Activated naive CD4-positive, alpha-beta T cell treated with anti-CD3 and anti-CD28 coated beads, Interleukin-2, amount 10 ng/mL, durations not matched to agents 7 days and 5 days (primary cell): ENCODE measurements at regions of chr17 and their contacts with region 1.

Region 1: GRCh38 chr17:31309556-31309955 is 4.3 kb downstream of the EVI2B start:
- DNase-seq: no peak
- H3K4me3 Mint-ChIP-seq: peak overlapping the region; percentile 88
- H3K27ac Mint-ChIP-seq: peak overlapping the region; percentile 97
- H3K4me1 Mint-ChIP-seq: peaks cover 54% of the 10 kb centered on the region
- H3K27me3 Mint-ChIP-seq: no peaks in the 10 kb centered on the region

Region 2: GRCh38 chr17:31321481-31321880 is 11.9 kb after region 1 on chr17 and contains the start of gene EVI2A:
- CTCF ChIA-PET with region 1: interaction called, 23 read pairs
- DNase-seq: peak; percentile 91
- H3K4me3 Mint-ChIP-seq: peak within 1 kb of the TSS; percentile 78
- H3K27ac Mint-ChIP-seq: peak within 1 kb of the TSS; percentile 94
- H3K4me1 Mint-ChIP-seq: peaks cover 30% of the 10 kb centered on the region
- H3K27me3 Mint-ChIP-seq: no peaks in the 10 kb centered on the region

Region 3: DNA sequence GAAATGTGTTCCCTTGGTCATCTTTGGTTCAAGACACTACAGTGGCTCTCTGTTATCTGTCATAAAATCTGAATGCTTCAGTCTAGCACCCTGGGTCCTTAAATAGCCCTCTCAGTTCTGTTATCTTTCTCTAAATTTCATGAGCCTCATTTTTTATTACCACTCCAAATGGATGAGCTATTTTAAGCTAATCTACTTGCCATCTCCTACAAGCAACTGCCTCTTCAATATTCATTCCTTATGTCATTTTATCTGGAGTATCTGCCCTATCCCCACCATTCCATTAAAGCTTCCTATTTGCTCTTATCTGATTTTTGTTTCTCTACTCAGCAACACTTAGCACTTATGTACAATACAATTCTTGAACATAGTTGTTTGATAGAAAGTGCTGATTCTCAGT is 39.9 kb after region 1 on chr17:
- CTCF ChIA-PET with region 1: no interaction called
- DNase-seq: no peak
- H3K4me3 Mint-ChIP-seq: no peak overlapping the region
- H3K27ac Mint-ChIP-seq: no peak overlapping the region
- H3K4me1 Mint-ChIP-seq: no peaks in the 10 kb centered on the region
- H3K27me3 Mint-ChIP-seq: no peaks in the 10 kb centered on the region

Region 4: GRCh38 chr17:31373150-31374093 is 63.9 kb after region 1 on chr17:
- CTCF ChIA-PET with region 1: interaction called, 18 read pairs
- DNase-seq: no peak
- H3K4me3 Mint-ChIP-seq: no peak overlapping the region
- H3K27ac Mint-ChIP-seq: no peak overlapping the region
- H3K4me1 Mint-ChIP-seq: peaks cover 19% of the 10 kb centered on the region
- H3K27me3 Mint-ChIP-seq: no peaks in the 10 kb centered on the region

Region 5: GRCh38 chr17:31385428-31386285 is 76.1 kb after region 1 on chr17:
- CTCF ChIA-PET with region 1: no interaction called
- DNase-seq: no peak
- H3K4me3 Mint-ChIP-seq: no peak overlapping the region
- H3K27ac Mint-ChIP-seq: no peak overlapping the region
- H3K4me1 Mint-ChIP-seq: peaks cover 4% of the 10 kb centered on the region
- H3K27me3 Mint-ChIP-seq: peaks cover 43% of the 10 kb centered on the region